ENCODE measurements at regions of chr10 and their contacts with region 1.

Region 1: DNA sequence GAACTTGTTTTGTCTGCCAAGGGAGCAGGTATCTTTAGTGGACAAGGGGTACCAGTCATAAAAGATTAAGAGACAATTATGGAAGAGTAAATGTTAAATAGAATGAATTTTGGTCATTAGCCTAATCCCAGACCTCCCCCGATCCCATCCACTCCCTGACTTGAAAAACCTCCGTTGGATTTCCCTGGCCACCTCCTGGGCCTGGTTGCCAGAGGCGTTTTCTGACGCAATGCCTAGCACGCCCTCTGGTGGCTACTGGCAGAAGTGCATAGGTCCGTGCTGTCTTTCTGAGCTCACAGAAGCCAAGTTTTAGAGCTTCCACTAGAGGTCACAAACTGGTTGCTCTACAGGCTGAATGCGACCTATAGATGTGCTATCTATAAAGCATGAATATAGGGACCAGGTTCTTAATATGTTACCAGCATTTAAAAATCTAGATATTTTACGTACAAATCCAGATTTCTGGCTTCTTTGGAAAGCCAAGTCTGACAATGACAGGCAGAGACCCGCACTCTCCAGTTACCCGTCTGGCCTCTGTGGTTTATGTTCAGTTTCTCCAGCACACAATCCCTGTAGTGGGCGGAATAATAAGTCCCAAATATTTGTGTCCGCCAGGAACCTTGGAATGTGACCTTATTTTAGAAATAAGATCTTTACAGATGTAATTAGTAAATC is 39.8 kb downstream of the SPOCK2 start:
- DNase-seq: peak; percentile 68 to 88 (median 83)
- ATAC-seq: peak; percentile 99
- H3K4me3 ChIP-seq: no peak overlapping the region
- H3K4me3 Mint-ChIP-seq: no peak overlapping the region
- H3K27ac ChIP-seq: no peak overlapping the region
- H3K27ac Mint-ChIP-seq: peak overlapping the region in 6 of 9 donors; percentile 5 to 67 (median 32)
- H3K4me1 ChIP-seq: no peaks in the 10 kb centered on the region
- H3K4me1 Mint-ChIP-seq: peaks cover 7 to 10% (median 8%) of the 10 kb centered on the region in 7 donors
- H3K27me3 ChIP-seq: no peaks in the 10 kb centered on the region
- H3K27me3 Mint-ChIP-seq: no peaks in the 10 kb centered on the region

Region 2: GRCh38 chr10:71314028-71314693 is 734.4 kb before region 1 on chr10:
- CTCF ChIA-PET with region 1: no interaction called
- POLR2A ChIA-PET with region 1: interaction called, 3 read pairs
- intact Hi-C with region 1: loop called (anchors 1 to 5 kb)
- DNase-seq: peak; percentile 18 to 56 (median 49)
- ATAC-seq: peak; percentile 62
- H3K4me3 ChIP-seq: no peak overlapping the region
- H3K4me3 Mint-ChIP-seq: peak overlapping the region in 3 of 10 donors; percentile 3 to 48 (median 25)
- H3K27ac ChIP-seq: no peak overlapping the region
- H3K27ac Mint-ChIP-seq: peak overlapping the region in 1 of 9 donors; percentile 55
- H3K4me1 ChIP-seq: peaks cover 5 to 6% of the 10 kb centered on the region in 2 donors
- H3K4me1 Mint-ChIP-seq: peaks cover 0 to 26% (median 13%) of the 10 kb centered on the region in 7 donors
- H3K27me3 ChIP-seq: no peaks in the 10 kb centered on the region
- H3K27me3 Mint-ChIP-seq: peaks cover 0 to 16% (median 14%) of the 10 kb centered on the region in 5 donors

Region 3: DNA sequence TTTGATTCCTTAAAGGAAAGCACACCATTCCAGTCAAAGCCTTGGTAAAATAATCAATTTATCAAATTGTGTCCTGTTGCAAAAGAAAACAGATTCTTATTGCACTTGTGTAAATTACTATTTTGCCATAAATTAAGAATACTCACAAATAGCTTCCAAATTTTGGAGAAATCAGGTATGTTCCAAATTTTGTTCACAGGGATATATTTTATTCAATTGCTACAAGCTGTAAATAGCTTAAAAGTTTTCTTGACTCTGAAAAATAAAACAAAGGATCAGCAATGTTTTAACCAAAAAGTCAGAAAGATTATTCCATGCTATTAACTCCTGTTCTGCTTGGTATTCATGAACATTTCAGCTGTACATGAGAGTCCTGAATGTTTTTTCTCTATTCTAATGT is 131.8 kb before region 1 on chr10:
- CTCF ChIA-PET with region 1: interaction called, 5 read pairs
- POLR2A ChIA-PET with region 1: no interaction called
- intact Hi-C with region 1: loop called in 1 of 2 experiments (anchors 1 kb)
- DNase-seq: no peak
- ATAC-seq: no peak
- H3K4me3 ChIP-seq: no peak overlapping the region
- H3K4me3 Mint-ChIP-seq: no peak overlapping the region
- H3K27ac ChIP-seq: no peak overlapping the region
- H3K27ac Mint-ChIP-seq: no peak overlapping the region
- H3K4me1 ChIP-seq: no peaks in the 10 kb centered on the region
- H3K4me1 Mint-ChIP-seq: peaks cover 0 to 13% (median under 1%) of the 10 kb centered on the region in 7 donors
- H3K27me3 ChIP-seq: peaks cover 0 to 3% of the 10 kb centered on the region in 2 donors
- H3K27me3 Mint-ChIP-seq: no peaks in the 10 kb centered on the region

Region 4: DNA sequence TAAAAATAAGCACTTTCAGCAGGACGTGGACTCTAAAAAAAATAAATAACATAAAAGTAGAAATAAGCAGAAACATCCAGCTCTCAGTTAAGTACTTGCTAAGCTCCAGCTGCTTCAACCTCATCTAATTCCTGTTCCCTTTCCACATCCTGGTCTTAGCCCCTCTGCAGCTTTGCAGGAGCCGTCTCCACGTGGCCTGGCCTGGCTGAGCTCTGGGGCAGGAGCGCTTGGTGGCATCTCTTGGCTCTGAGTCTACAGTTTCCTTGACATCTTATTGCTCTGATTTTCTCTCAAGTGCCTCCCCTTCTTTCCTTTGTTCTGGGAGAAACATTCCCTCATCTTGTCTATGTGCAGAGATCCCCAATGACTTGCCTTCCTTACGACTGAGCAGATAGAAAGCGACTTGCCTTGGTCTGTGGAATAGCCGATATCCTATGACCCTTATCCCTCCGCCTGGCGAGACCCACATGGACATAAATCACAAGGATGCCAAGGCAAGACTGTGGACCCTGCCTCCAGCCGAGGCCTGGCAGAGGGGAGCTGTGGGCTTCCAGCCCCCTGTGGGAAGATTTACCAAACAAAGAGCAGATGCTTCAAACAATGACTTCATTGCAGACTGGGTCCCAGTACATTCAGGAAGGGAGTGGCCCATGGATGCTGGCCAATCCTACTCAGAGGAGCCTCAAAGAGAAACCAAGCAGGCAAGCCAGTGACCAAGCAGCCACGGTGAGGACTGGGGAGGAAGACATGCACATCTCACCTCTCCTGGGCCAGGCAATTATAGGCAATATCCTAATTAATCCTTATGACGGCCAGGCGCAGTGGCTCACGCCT is 22.1 kb before region 1 on chr10:
- CTCF ChIA-PET with region 1: no interaction called
- POLR2A ChIA-PET with region 1: no interaction called
- intact Hi-C with region 1: no loop called
- DNase-seq: no peak
- ATAC-seq: no peak
- H3K4me3 ChIP-seq: no peak overlapping the region
- H3K4me3 Mint-ChIP-seq: no peak overlapping the region
- H3K27ac ChIP-seq: no peak overlapping the region
- H3K27ac Mint-ChIP-seq: no peak overlapping the region
- H3K4me1 ChIP-seq: no peaks in the 10 kb centered on the region
- H3K4me1 Mint-ChIP-seq: peaks cover 0 to 4% (median 0%) of the 10 kb centered on the region in 7 donors
- H3K27me3 ChIP-seq: no peaks in the 10 kb centered on the region
- H3K27me3 Mint-ChIP-seq: peaks cover 0 to 7% (median 4%) of the 10 kb centered on the region in 5 donors

Region 5: DNA sequence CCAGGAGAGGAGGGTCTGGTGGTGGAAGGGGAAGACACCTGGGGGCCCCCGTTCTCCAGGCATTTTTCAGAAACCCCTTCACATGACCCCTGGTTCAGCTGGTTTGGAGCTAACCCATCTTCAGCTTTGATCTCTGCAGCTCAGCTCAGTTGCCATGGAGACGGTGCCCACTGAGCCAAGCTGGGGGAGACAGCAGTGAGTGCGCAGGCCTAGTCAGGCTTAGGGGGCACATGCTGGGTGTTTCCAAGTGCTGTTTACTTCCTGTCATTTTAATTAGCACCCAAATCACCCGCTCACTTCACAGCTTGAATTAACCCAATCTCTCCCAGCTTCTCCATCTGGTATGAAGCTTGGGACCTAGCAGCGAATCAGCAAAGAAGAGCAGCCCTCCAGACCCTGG is 30.8 kb after region 1 on chr10:
- CTCF ChIA-PET with region 1: interaction called, 12 read pairs
- POLR2A ChIA-PET with region 1: interaction called, 9 read pairs
- intact Hi-C with region 1: loop called in 1 of 2 experiments (anchors 2 kb)
- DNase-seq: peak in 6 of 9 donors; percentile 61 to 87 (median 72)
- ATAC-seq: peak; percentile 71
- H3K4me3 ChIP-seq: peak overlapping the region; percentile 21
- H3K4me3 Mint-ChIP-seq: peak overlapping the region; percentile 51 to 98 (median 84)
- H3K27ac ChIP-seq: peak overlapping the region; percentile 99
- H3K27ac Mint-ChIP-seq: peak overlapping the region; percentile 56 to 96 (median 91)
- H3K4me1 ChIP-seq: peaks cover 91 to 93% of the 10 kb centered on the region in 2 donors
- H3K4me1 Mint-ChIP-seq: peaks cover 70 to 98% (median 89%) of the 10 kb centered on the region in 7 donors
- H3K27me3 ChIP-seq: no peaks in the 10 kb centered on the region
- H3K27me3 Mint-ChIP-seq: no peaks in the 10 kb centered on the region

Region 6: GRCh38 chr10:72097448-72098300 is 49.1 kb after region 1 on chr10:
- CTCF ChIA-PET with region 1: no interaction called
- POLR2A ChIA-PET with region 1: no interaction called
- intact Hi-C with region 1: no loop called
- DNase-seq: no peak
- ATAC-seq: no peak
- H3K4me3 ChIP-seq: no peak overlapping the region
- H3K4me3 Mint-ChIP-seq: no peak overlapping the region
- H3K27ac ChIP-seq: no peak overlapping the region
- H3K27ac Mint-ChIP-seq: peak overlapping the region in 1 of 9 donors; percentile 17
- H3K4me1 ChIP-seq: peaks cover 0 to 18% of the 10 kb centered on the region in 2 donors
- H3K4me1 Mint-ChIP-seq: peaks cover 28 to 74% (median 50%) of the 10 kb centered on the region in 7 donors
- H3K27me3 ChIP-seq: no peaks in the 10 kb centered on the region
- H3K27me3 Mint-ChIP-seq: no peaks in the 10 kb centered on the region

Region 7: DNA sequence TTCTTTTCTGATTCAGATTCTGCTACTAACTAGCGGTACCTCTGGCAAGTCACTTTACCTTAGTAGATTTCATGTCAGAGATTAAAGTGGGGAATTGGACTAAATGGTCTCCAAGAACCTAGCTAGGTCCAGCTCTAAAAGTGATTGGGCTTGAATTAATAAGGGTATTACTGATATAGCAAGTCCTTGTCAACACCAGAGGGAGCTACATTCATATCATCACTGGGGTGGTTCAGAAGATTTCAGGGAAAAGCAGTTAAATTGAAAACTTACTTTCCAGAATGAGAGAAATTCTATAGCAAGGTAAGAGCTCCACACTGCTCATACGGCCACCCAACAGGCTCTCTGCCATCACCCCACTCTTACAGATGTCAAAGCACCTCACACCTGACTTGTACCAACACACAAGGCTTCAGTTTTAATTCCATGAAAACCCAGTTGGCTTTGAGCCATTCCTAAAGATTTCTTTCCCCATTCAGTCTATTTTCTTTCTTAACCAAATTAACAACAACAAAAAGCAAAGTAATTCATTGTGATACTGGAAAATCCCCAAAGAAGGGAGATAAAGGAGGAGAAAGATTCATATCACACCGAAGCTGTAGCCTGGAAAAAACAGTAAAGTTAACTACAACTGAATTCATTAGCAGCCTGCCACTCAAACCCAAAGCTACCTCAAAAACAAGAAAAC is 77.7 kb after region 1 on chr10:
- CTCF ChIA-PET with region 1: interaction called, 18 read pairs
- POLR2A ChIA-PET with region 1: interaction called, 3 read pairs
- intact Hi-C with region 1: no loop called
- DNase-seq: peak in 1 of 9 donors; percentile 16
- ATAC-seq: no peak
- H3K4me3 ChIP-seq: no peak overlapping the region
- H3K4me3 Mint-ChIP-seq: no peak overlapping the region
- H3K27ac ChIP-seq: no peak overlapping the region
- H3K27ac Mint-ChIP-seq: peak overlapping the region in 4 of 9 donors; percentile 5 to 63 (median 18)
- H3K4me1 ChIP-seq: peaks cover 5 to 10% of the 10 kb centered on the region in 2 donors
- H3K4me1 Mint-ChIP-seq: peaks cover 18 to 54% (median 42%) of the 10 kb centered on the region in 7 donors
- H3K27me3 ChIP-seq: no peaks in the 10 kb centered on the region
- H3K27me3 Mint-ChIP-seq: no peaks in the 10 kb centered on the region

Region 8: GRCh38 chr10:72223743-72224101 is 175.1 kb after region 1 on chr10:
- CTCF ChIA-PET with region 1: interaction called, 28 read pairs
- POLR2A ChIA-PET with region 1: interaction called, 3 read pairs
- intact Hi-C with region 1: loop called (anchors 1 kb)
- DNase-seq: no peak
- ATAC-seq: peak; percentile 37
- H3K4me3 ChIP-seq: no peak overlapping the region
- H3K4me3 Mint-ChIP-seq: peak overlapping the region in 8 of 10 donors; percentile 43 to 81 (median 56)
- H3K27ac ChIP-seq: peak overlapping the region; percentile 43
- H3K27ac Mint-ChIP-seq: peak overlapping the region; percentile 35 to 89 (median 72)
- H3K4me1 ChIP-seq: peaks cover 9 to 48% of the 10 kb centered on the region in 2 donors
- H3K4me1 Mint-ChIP-seq: peaks cover 43 to 68% (median 57%) of the 10 kb centered on the region in 7 donors
- H3K27me3 ChIP-seq: no peaks in the 10 kb centered on the region
- H3K27me3 Mint-ChIP-seq: no peaks in the 10 kb centered on the region

Region 9: DNA sequence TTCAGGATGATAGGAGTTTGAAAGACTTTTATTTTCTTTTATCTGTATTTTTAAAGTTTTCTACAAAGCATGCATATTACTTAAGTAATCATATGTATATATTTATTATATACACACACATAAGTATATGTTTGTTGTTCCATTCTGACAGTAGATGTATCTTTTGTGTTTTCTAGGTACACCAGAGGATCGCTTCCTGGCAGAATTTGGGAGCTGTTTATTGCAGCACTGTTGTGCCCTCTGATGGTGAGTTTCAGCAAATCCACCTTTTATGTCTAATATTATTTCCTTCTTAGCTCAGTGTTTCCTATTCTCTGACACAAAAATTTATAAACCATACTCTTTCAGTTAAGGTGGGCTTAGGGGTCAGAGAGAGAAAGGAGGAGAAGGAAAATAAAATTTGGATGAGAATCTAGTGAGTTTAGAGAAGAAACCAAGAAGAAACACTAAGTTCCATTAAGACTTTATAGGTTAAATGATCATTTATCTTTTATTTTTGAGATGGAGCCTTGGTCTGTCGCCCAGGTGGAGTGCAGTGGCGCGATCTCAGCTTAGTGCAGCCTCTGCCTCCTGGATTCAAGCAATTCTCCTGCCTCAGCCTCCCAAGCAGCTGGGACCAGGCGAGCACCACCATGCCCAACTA is 785.7 kb after region 1 on chr10:
- CTCF ChIA-PET with region 1: interaction called, 4 read pairs
- POLR2A ChIA-PET with region 1: no interaction called
- intact Hi-C with region 1: loop called in 1 of 2 experiments (anchors 10 kb)
- DNase-seq: peak in 7 of 9 donors; percentile 28 to 61 (median 43)
- ATAC-seq: peak; percentile 73
- H3K4me3 ChIP-seq: no peak overlapping the region
- H3K4me3 Mint-ChIP-seq: no peak overlapping the region
- H3K27ac ChIP-seq: no peak overlapping the region
- H3K27ac Mint-ChIP-seq: no peak overlapping the region
- H3K4me1 ChIP-seq: no peaks in the 10 kb centered on the region
- H3K4me1 Mint-ChIP-seq: peaks cover 0 to 1% (median 0%) of the 10 kb centered on the region in 7 donors
- H3K27me3 ChIP-seq: no peaks in the 10 kb centered on the region
- H3K27me3 Mint-ChIP-seq: no peaks in the 10 kb centered on the region